ENCODE measurements at regions of chrX and their contacts with region 1.

Region 1: GRCh38 chrX:16786139-16786790 is at the start of gene TXLNG:
- DNase-seq: peak; percentile 95 to 100 (median 98)
- ATAC-seq: peak; percentile 99
- H3K4me3 ChIP-seq: peak within 1 kb of the TSS; percentile 31 to 45
- H3K27ac ChIP-seq: peak within 1 kb of the TSS; percentile 79 to 91 (median 82)
- H3K4me1 ChIP-seq: peaks cover 4% of the 10 kb centered on the region
- H3K27me3 ChIP-seq: no peaks in the 10 kb centered on the region
- CTCF ChIP-seq: no peak
- POLR2A ChIP-seq: peak; percentile 86 to 93 (median 92)
- total RNA-seq, gene TXLNG: 10.9 to 12.9 TPM

Region 2: GRCh38 chrX:16511776-16512400 is 274.4 kb before region 1 on chrX:
- intact Hi-C with region 1: no loop called
- DNase-seq: no peak
- ATAC-seq: no peak
- H3K4me3 ChIP-seq: no peak overlapping the region
- H3K27ac ChIP-seq: no peak overlapping the region
- H3K4me1 ChIP-seq: no peaks in the 10 kb centered on the region
- H3K27me3 ChIP-seq: no peaks in the 10 kb centered on the region
- CTCF ChIP-seq: no peak
- POLR2A ChIP-seq: no peak

Region 3: DNA sequence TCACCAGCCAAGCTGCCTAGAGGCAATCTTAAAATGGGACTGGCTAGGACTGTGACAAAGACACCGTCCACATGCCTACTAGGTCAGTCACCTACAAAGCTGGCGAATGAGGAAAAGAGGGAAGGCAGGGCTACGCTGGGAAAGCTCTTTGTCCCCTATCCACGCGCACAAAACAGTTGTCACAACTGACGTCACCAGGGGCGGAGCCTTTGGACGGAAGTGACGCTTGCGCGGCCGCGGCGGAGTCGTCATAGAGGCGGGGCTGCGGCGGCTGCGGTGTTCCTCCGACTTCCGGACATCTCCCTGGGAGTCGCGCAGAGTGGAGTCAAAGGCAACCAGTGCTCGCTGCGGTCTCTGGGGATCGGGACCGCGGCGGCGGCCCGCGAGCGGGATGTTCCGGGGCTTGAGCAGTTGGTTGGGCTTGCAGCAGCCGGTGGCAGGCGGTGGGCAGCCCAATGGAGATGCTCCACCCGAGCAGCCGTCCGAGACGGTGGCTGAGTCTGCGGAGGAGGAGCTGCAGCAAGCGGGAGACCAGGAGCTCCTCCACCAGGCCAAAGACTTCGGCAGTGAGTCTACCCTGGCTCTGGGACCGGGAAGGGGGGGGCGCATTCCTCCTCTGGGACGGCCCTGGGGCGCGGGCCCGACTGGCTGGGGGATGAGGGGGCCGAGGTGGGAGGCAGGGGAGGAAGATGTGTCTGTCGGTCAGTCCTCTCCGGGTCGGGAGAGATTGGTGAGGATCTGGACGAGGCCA is 66.8 kb before region 1 on chrX and contains the start of gene SYAP1:
- intact Hi-C with region 1: loop called (anchors 10 kb)
- DNase-seq: peak; percentile 95 to 99 (median 97)
- ATAC-seq: peak; percentile 97
- H3K4me3 ChIP-seq: peak within 1 kb of the TSS; percentile 37 to 57
- H3K27ac ChIP-seq: peak within 1 kb of the TSS; percentile 85 to 98 (median 95)
- H3K4me1 ChIP-seq: peaks cover 16% of the 10 kb centered on the region
- H3K27me3 ChIP-seq: no peaks in the 10 kb centered on the region
- CTCF ChIP-seq: peak in 1 of 7 experiments; percentile 18
- POLR2A ChIP-seq: peak; percentile 96 to 98 (median 98)
- total RNA-seq, gene SYAP1: 15.3 to 15.8 TPM

Region 4: DNA sequence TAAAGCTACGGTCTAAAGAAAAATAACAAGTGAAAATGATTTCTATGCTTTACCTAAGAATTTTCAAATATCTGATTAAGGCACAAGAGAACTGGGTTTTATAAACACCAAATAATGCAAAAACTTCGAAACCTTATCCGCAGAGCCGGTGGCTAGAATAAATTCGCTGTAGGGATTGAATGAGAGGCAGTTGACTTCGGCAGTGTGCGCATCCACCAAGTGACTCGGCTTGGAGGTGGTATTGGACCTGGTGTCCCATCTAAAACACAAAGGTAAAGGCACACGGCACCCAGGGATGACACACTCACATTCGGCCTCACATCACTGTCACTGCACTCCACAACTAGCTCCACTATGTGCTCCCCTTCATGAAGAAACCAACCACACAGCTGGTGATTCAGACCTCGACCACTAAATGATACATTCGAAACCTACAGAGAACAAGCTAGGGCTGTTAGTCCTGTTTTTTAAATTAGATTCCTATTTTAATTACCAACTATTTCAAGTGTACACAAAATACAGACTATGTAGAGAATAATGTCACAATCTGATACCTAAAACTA is 66.4 kb after region 1 on chrX:
- intact Hi-C with region 1: no loop called
- DNase-seq: no peak
- ATAC-seq: no peak
- H3K4me3 ChIP-seq: no peak overlapping the region
- H3K27ac ChIP-seq: no peak overlapping the region
- H3K4me1 ChIP-seq: no peaks in the 10 kb centered on the region
- H3K27me3 ChIP-seq: no peaks in the 10 kb centered on the region
- CTCF ChIP-seq: no peak
- POLR2A ChIP-seq: no peak

Measured in body of pancreas (tissue), 4 donors.